HEK293 (cell line): ENCODE measurements at regions of chr5 and their contacts with region 1.

Region 1: GRCh38 chr5:113513384-113514288 is at the start of gene YTHDC2:
- H3K4me3 ChIP-seq: peak within 1 kb of the TSS; percentile 94
- H3K27ac ChIP-seq: peak within 1 kb of the TSS; percentile 77
- H3K4me1 ChIP-seq: no peaks in the 10 kb centered on the region
- CTCF ChIP-seq: peak; percentile 87

Region 2: DNA sequence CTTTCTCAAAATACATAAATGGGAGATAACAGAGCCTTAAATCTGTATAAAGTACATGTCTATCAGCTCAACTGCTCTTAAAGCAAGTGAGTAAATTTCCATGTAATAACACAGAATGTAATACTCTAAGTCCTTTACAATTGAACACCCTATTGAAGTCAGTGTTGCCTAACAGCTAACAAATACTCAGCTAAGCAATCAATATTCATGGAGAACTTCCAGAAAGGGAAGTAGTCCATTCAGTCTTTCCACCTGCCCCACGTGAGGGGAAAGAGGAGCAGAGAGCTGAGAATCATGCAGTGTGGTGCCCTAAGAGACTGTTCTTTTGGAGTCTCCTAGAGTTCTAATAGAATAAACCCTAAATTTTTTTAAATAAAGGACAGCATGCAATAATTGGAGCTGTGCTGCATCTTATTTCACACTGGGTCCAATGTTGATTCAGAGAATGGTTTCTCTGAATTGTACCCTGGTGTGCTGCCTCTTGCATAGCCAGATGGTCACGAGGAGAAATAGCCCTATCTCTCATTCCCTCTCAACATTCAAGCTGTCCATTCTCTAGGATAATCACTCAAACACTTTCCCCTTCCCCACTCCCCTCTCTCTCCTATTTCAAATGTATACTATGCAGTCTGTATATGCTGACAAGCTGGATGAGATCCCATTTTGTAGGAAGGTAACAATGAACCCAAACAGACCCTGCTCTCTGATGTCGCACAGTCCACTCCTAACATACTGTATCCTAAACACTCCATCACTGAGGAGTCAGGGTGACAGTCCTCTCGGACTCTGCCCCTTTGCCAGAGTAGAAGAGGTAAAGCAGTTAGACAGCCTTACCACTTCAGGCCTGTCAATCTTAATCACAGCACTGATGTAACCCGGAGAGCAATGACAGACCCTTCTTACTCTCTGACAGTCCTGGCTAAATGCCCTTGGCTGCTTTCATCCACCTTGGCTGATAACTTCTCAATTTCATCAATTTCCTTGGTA is 1229.4 kb before region 1 on chr5:
- CTCF ChIA-PET with region 1: no interaction called
- POLR2A ChIA-PET with region 1: no interaction called
- H3K4me3 ChIP-seq: no peak overlapping the region
- H3K27ac ChIP-seq: no peak overlapping the region
- H3K4me1 ChIP-seq: no peaks in the 10 kb centered on the region
- CTCF ChIP-seq: no peak

Region 3: GRCh38 chr5:113059232-113060040 is 454.2 kb before region 1 on chr5:
- CTCF ChIA-PET with region 1: no interaction called
- POLR2A ChIA-PET with region 1: no interaction called
- H3K4me3 ChIP-seq: no peak overlapping the region
- H3K27ac ChIP-seq: no peak overlapping the region
- H3K4me1 ChIP-seq: no peaks in the 10 kb centered on the region; the same call in 1 of the 2 replicates
- CTCF ChIP-seq: no peak

Region 4: GRCh38 chr5:113330533-113331208 is 183.0 kb before region 1 on chr5:
- CTCF ChIA-PET with region 1: interaction called, 17 read pairs
- POLR2A ChIA-PET with region 1: no interaction called
- H3K4me3 ChIP-seq: no peak overlapping the region
- H3K27ac ChIP-seq: no peak overlapping the region
- H3K4me1 ChIP-seq: no peaks in the 10 kb centered on the region
- CTCF ChIP-seq: 0 out of 2 replicates have a peak, but pooled peaks have one; percentile 13

Region 5: GRCh38 chr5:113336975-113337374 is 176.7 kb before region 1 on chr5:
- CTCF ChIA-PET with region 1: interaction called, 36 read pairs
- POLR2A ChIA-PET with region 1: interaction called, 3 read pairs
- H3K4me3 ChIP-seq: no peak overlapping the region
- H3K27ac ChIP-seq: no peak overlapping the region
- H3K4me1 ChIP-seq: no peaks in the 10 kb centered on the region
- CTCF ChIP-seq: peak; percentile 70

Region 6: DNA sequence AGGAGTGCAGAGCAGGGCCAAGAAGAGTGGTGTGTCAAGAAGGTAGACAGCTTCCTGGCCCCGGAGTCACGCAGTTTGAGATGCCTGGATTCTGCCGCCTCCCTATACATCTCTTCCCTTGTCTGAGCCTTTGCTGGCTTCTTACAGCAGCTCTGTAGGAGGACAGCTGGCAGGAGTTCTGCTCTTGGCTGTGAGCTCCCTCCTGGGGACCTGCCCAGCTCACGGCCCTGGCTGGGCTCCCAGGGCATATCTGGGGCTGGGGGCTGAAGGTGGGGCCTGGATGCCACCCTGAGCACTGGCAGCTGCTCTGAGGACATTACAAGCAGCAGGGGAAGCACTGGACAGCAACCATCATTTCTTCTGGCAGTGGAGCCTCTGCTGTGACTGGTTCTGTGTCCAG is 78.1 kb before region 1 on chr5:
- CTCF ChIA-PET with region 1: no interaction called
- POLR2A ChIA-PET with region 1: no interaction called
- H3K4me3 ChIP-seq: no peak overlapping the region
- H3K27ac ChIP-seq: no peak overlapping the region
- H3K4me1 ChIP-seq: no peaks in the 10 kb centered on the region
- CTCF ChIP-seq: no peak

Region 7: GRCh38 chr5:113487781-113488644 is 25.6 kb before region 1 on chr5 and contains the start of gene MCC:
- CTCF ChIA-PET with region 1: interaction called, 5 read pairs
- POLR2A ChIA-PET with region 1: interaction called, 10 read pairs
- H3K4me3 ChIP-seq: peak within 1 kb of the TSS; percentile 83
- H3K27ac ChIP-seq: peak within 1 kb of the TSS; percentile 68
- H3K4me1 ChIP-seq: peaks cover 15% of the 10 kb centered on the region; the same call in 1 of the 2 replicates
- CTCF ChIP-seq: no peak